ENCODE measurements at regions of chr12 and their contacts with region 1.

Region 1: GRCh38 chr12:15469356-15469755 is 147.0 kb downstream of the PTPRO start:
- DNase-seq: no peak
- H3K4me3 ChIP-seq: no peak overlapping the region
- CTCF ChIP-seq: no peak

Region 2: DNA sequence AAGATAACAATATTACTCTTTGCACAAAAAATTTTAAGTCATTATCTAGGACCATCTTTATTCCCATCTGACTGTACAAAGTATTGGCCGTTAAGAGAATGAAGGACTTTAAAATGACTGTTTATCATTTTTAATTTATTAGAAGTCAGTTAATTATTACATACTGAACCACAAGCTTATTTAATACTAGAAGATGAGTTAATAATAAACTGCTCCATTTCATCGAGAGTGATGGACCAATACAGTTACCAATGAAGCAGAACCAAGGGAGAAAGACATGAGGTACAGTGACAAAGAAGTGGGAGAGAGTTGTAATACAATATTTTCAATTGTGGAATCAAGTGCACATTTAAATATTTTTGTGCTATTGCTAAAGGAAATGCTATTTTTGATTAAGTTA is 63.8 kb before region 1 on chr12:
- in situ Hi-C with region 1: loop called (anchors 5 kb)
- DNase-seq: no peak
- H3K4me3 ChIP-seq: no peak overlapping the region
- CTCF ChIP-seq: no peak

Region 3: GRCh38 chr12:16100206-16100605 is 630.9 kb after region 1 on chr12:
- in situ Hi-C with region 1: no loop called
- DNase-seq: no peak
- H3K4me3 ChIP-seq: no peak overlapping the region
- CTCF ChIP-seq: no peak

Measured in astrocyte of the cerebellum (primary cell).